ENCODE measurements at regions of chr4 and their contacts with region 1.

Region 1: GRCh38 chr4:113707048-113707447 is 54.5 kb downstream of the CAMK2D start:
- DNase-seq: no peak
- H3K4me3 Mint-ChIP-seq: no peak overlapping the region
- H3K27ac Mint-ChIP-seq: no peak overlapping the region
- H3K4me1 Mint-ChIP-seq: peaks cover 21% of the 10 kb centered on the region
- H3K27me3 Mint-ChIP-seq: no peaks in the 10 kb centered on the region

Region 2: GRCh38 chr4:113725963-113726362 is 18.9 kb after region 1 on chr4:
- intact Hi-C with region 1: loop called (anchors 2 kb)
- DNase-seq: no peak
- H3K4me3 Mint-ChIP-seq: peak overlapping the region; percentile 4
- H3K27ac Mint-ChIP-seq: peak overlapping the region; percentile 41
- H3K4me1 Mint-ChIP-seq: peaks cover 39% of the 10 kb centered on the region
- H3K27me3 Mint-ChIP-seq: no peaks in the 10 kb centered on the region

Measured in activated CD4-positive, alpha-beta T cell treated with anti-CD3 and anti-CD28 coated beads, Interleukin-2, amount 10 ng/mL, durations not matched to agents 24 days and 14 days (primary cell).